T-cell (primary cell): ENCODE measurements at regions of chrX and their contacts with region 1.

Region 1: DNA sequence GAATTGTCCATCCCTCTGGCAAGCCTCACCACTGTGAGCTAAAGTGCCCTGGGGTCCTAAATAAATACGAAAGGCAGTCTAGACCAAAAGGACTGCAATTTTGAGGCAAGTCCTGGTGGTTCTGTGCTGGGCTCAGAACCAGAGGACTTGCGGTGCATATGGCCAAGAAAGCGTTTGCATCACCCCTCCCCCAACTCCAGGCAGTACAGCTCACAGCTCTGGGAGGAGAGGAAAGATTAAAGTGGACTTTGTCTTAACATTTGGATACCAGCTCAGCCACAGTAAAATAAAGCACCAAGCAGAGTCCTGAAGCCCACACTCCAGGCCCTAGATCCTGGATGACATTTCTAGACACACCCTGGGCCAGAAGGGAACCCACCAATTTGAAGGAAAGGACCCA is 24.9 kb downstream of the RNF128 start:
- DNase-seq: no peak
- ATAC-seq: no peak
- H3K4me3 ChIP-seq: no peak overlapping the region
- H3K4me3 Mint-ChIP-seq: no peak overlapping the region
- H3K27ac ChIP-seq: no peak overlapping the region
- H3K27ac Mint-ChIP-seq: no peak overlapping the region
- H3K4me1 ChIP-seq: no peaks in the 10 kb centered on the region
- H3K4me1 Mint-ChIP-seq: no peaks in the 10 kb centered on the region
- H3K27me3 ChIP-seq: peaks cover 0 to 3% of the 10 kb centered on the region in 2 experiments
- H3K27me3 Mint-ChIP-seq: peaks cover 8 to 46% of the 10 kb centered on the region in 2 donors

Region 2: GRCh38 chrX:106707771-106708454 is 43.5 kb before region 1 on chrX:
- CTCF ChIA-PET with region 1: no interaction called
- POLR2A ChIA-PET with region 1: interaction called in 1 of 2 experiments, 12 read pairs
- DNase-seq: no peak
- ATAC-seq: no peak
- H3K4me3 ChIP-seq: no peak overlapping the region
- H3K4me3 Mint-ChIP-seq: no peak overlapping the region
- H3K27ac ChIP-seq: no peak overlapping the region
- H3K27ac Mint-ChIP-seq: no peak overlapping the region
- H3K4me1 ChIP-seq: no peaks in the 10 kb centered on the region
- H3K4me1 Mint-ChIP-seq: no peaks in the 10 kb centered on the region
- H3K27me3 ChIP-seq: no peaks in the 10 kb centered on the region
- H3K27me3 Mint-ChIP-seq: peaks cover 0 to 21% of the 10 kb centered on the region in 2 donors

Region 3: GRCh38 chrX:106791495-106791894 is 40.1 kb after region 1 on chrX:
- CTCF ChIA-PET with region 1: no interaction called
- POLR2A ChIA-PET with region 1: no interaction called
- DNase-seq: peak in 1 of 35 experiments; percentile 27
- ATAC-seq: no peak
- H3K4me3 ChIP-seq: no peak overlapping the region
- H3K4me3 Mint-ChIP-seq: no peak overlapping the region
- H3K27ac ChIP-seq: no peak overlapping the region
- H3K27ac Mint-ChIP-seq: no peak overlapping the region
- H3K4me1 ChIP-seq: no peaks in the 10 kb centered on the region
- H3K4me1 Mint-ChIP-seq: no peaks in the 10 kb centered on the region
- H3K27me3 ChIP-seq: peaks cover 0 to 2% of the 10 kb centered on the region in 2 experiments
- H3K27me3 Mint-ChIP-seq: peaks cover 0 to 7% of the 10 kb centered on the region in 2 donors